Heart left ventricle (tissue), 16 donors: ENCODE measurements at regions of chr4 and their contacts with region 1.

Region 1: GRCh38 chr4:82268050-82268825 is 105.6 kb downstream of the HNRNPD start:
- DNase-seq: peak; percentile 37 to 69 (median 40)
- ATAC-seq: peak; percentile 90 to 98 (median 96)
- H3K4me3 ChIP-seq: peak overlapping the region in 2 of 12 donors; percentile 15 to 25
- H3K27ac ChIP-seq: peak overlapping the region in 1 of 12 donors; percentile 75
- H3K4me1 ChIP-seq: peaks cover 0 to 8% (median 0%) of the 10 kb centered on the region in 12 donors
- H3K27me3 ChIP-seq: peaks cover 0 to 3% (median 0%) of the 10 kb centered on the region in 9 donors
- CTCF ChIP-seq: peak; percentile 50 to 78 (median 70)
- POLR2A ChIP-seq: no peak

Region 2: GRCh38 chr4:81454499-81454898 is 813.7 kb before region 1 on chr4:
- intact Hi-C with region 1: loop called in 1 of 10 experiments (anchors 10 kb)
- DNase-seq: no peak
- ATAC-seq: no peak
- H3K4me3 ChIP-seq: no peak overlapping the region
- H3K27ac ChIP-seq: no peak overlapping the region
- H3K4me1 ChIP-seq: peaks cover 0 to 8% (median 0%) of the 10 kb centered on the region in 12 donors
- H3K27me3 ChIP-seq: no peaks in the 10 kb centered on the region
- CTCF ChIP-seq: no peak
- POLR2A ChIP-seq: no peak

Region 3: GRCh38 chr4:81460191-81460701 is 808.0 kb before region 1 on chr4:
- intact Hi-C with region 1: loop called in 5 of 10 experiments (anchors 5 to 10 kb)
- DNase-seq: no peak
- ATAC-seq: no peak
- H3K4me3 ChIP-seq: no peak overlapping the region
- H3K27ac ChIP-seq: no peak overlapping the region
- H3K4me1 ChIP-seq: peaks cover 0 to 9% (median 0%) of the 10 kb centered on the region in 12 donors
- H3K27me3 ChIP-seq: no peaks in the 10 kb centered on the region
- CTCF ChIP-seq: no peak
- POLR2A ChIP-seq: no peak

Region 4: GRCh38 chr4:81844717-81845116 is 423.5 kb before region 1 on chr4:
- intact Hi-C with region 1: loop called in 2 of 10 experiments (anchors 10 kb)
- DNase-seq: peak in 4 of 5 donors; percentile 49 to 67 (median 54)
- ATAC-seq: peak; percentile 80 to 96 (median 88)
- H3K4me3 ChIP-seq: no peak overlapping the region
- H3K27ac ChIP-seq: no peak overlapping the region
- H3K4me1 ChIP-seq: peaks cover 0 to 10% (median 3%) of the 10 kb centered on the region in 12 donors
- H3K27me3 ChIP-seq: no peaks in the 10 kb centered on the region
- CTCF ChIP-seq: peak; percentile 65 to 91 (median 78)
- POLR2A ChIP-seq: no peak

Region 5: DNA sequence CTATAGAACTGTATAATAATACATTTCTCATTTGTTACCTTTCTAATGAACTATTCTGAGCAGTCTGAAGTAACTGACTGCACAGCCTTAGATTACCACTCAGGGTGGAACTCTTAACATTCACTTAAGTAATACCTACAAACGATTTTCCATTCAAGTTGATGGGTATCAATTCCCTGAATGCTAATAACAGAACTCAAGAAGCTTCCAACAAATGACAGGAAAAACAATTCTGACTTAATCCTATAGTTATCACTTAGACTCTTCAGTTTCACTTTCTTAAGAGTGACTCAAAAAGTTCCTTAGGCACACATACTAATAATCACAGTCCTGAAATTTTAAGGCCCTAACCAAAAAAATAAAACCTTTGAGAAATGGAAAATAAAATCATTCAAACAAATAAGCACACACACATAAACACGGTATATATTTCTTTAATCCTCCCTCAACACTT is 84.7 kb after region 1 on chr4:
- intact Hi-C with region 1: no loop called
- DNase-seq: no peak
- ATAC-seq: no peak
- H3K4me3 ChIP-seq: no peak overlapping the region
- H3K27ac ChIP-seq: peak overlapping the region in 1 of 12 donors; percentile 40
- H3K4me1 ChIP-seq: peaks cover 0 to 27% (median 4%) of the 10 kb centered on the region in 12 donors
- H3K27me3 ChIP-seq: no peaks in the 10 kb centered on the region
- CTCF ChIP-seq: no peak
- POLR2A ChIP-seq: no peak